ENCODE measurements at regions of chr11 and their contacts with region 1.

Region 1: DNA sequence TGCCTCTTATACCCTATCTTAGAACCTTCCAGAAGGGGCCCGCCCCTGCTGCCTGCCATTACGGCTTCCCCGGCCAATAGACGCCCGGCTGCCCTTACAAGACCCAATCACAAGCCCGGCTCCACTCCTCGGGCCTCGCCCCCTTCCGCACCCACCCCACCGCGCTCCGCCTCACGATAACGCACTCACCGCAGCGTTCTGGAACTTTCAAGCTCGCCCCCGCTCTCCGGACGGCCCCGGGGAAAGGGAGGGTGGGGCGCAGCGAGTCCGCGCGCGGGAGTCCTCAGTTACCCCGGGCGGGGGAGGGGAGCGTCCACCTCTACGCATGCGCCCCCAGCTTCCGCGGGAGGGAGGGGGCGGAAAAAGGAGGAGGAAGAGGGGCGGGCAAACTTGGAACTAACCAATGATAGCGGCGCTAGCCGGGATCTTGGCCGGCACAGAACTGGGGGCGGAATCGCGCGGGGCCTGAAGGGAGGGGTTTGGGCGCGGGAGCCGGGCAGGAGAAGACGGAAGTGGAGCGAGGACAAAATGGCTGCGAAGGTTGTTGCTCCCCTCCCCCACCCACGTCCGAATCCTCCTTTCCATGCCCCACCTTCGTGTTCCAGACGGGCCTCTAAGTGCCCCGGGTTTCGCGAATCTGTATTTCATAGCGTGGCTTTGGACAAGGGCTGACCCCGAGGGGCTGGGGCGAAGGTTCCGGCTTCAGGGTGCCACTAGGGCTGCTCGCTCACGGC is 389 bp upstream of the HSPA8 start:
- DNase-seq: peak; percentile 100
- H3K4me3 ChIP-seq: peak overlapping the region; percentile 85 to 96 (median 91)
- H3K27ac ChIP-seq: peak overlapping the region; percentile 99
- H3K4me1 ChIP-seq: peaks cover 26% of the 10 kb centered on the region
- H3K27me3 ChIP-seq: no peaks in the 10 kb centered on the region
- CTCF ChIP-seq: no peak

Region 2: GRCh38 chr11:122808478-122808869 is 253.9 kb before region 1 on chr11:
- CTCF ChIA-PET with region 1: interaction called, 17 read pairs
- dilution Hi-C with region 1: no loop called
- in situ Hi-C with region 1: no loop called
- intact Hi-C with region 1: loop called (anchors 1 kb)
- DNase-seq: peak; percentile 71
- H3K4me3 ChIP-seq: no peak overlapping the region
- H3K27ac ChIP-seq: peak overlapping the region; percentile 59
- H3K4me1 ChIP-seq: peaks cover 50% of the 10 kb centered on the region
- H3K27me3 ChIP-seq: no peaks in the 10 kb centered on the region
- CTCF ChIP-seq: no peak

Region 3: GRCh38 chr11:123020968-123021367 is 41.4 kb before region 1 on chr11:
- CTCF ChIA-PET with region 1: no interaction called
- dilution Hi-C with region 1: no loop called
- in situ Hi-C with region 1: no loop called
- intact Hi-C with region 1: no loop called
- DNase-seq: peak; percentile 20
- H3K4me3 ChIP-seq: no peak overlapping the region
- H3K27ac ChIP-seq: no peak overlapping the region
- H3K4me1 ChIP-seq: no peaks in the 10 kb centered on the region
- H3K27me3 ChIP-seq: no peaks in the 10 kb centered on the region
- CTCF ChIP-seq: peak; percentile 60 to 76

Region 4: DNA sequence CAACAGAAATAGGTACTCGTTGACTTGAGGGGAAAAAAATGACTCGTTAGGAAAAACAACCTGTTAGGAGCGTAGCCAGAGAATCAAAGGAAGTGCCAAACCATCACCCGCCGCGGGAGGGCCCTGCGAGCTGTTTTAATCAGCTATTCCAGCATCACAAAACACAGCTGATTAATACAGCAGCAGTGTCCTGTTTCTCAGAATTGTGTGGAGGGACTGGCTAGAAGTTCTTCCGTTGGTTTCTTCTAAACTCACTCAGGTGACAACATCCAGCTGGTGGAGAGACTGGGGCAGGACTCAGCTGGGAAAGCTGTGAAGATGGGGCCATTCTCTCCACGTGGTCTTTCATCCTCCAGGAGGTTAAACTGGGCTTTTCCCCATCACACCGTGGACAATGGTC is 28.4 kb before region 1 on chr11:
- CTCF ChIA-PET with region 1: no interaction called
- dilution Hi-C with region 1: no loop called
- in situ Hi-C with region 1: no loop called
- intact Hi-C with region 1: no loop called
- DNase-seq: no peak
- H3K4me3 ChIP-seq: no peak overlapping the region
- H3K27ac ChIP-seq: no peak overlapping the region
- H3K4me1 ChIP-seq: no peaks in the 10 kb centered on the region
- H3K27me3 ChIP-seq: no peaks in the 10 kb centered on the region
- CTCF ChIP-seq: no peak

Region 5: GRCh38 chr11:123122341-123122740 is 60.0 kb after region 1 on chr11:
- CTCF ChIA-PET with region 1: interaction called, 17 read pairs
- dilution Hi-C with region 1: loop called (anchors 5 kb)
- in situ Hi-C with region 1: no loop called
- intact Hi-C with region 1: no loop called
- DNase-seq: peak; percentile 43
- H3K4me3 ChIP-seq: no peak overlapping the region
- H3K27ac ChIP-seq: peak overlapping the region; percentile 56
- H3K4me1 ChIP-seq: peaks cover 22% of the 10 kb centered on the region
- H3K27me3 ChIP-seq: no peaks in the 10 kb centered on the region
- CTCF ChIP-seq: no peak

Region 6: GRCh38 chr11:123188508-123189165 is 126.3 kb after region 1 on chr11:
- CTCF ChIA-PET with region 1: no interaction called
- dilution Hi-C with region 1: no loop called
- in situ Hi-C with region 1: no loop called
- intact Hi-C with region 1: loop called (anchors 5 kb)
- DNase-seq: peak; percentile 68
- H3K4me3 ChIP-seq: peak overlapping the region; percentile 2 to 24 (median 5)
- H3K27ac ChIP-seq: peak overlapping the region; percentile 57
- H3K4me1 ChIP-seq: peaks cover 74% of the 10 kb centered on the region
- H3K27me3 ChIP-seq: no peaks in the 10 kb centered on the region
- CTCF ChIP-seq: no peak

Measured in mammary epithelial cell (primary cell).